ENCODE measurements at regions of chr12 and their contacts with region 1.

Region 1: DNA sequence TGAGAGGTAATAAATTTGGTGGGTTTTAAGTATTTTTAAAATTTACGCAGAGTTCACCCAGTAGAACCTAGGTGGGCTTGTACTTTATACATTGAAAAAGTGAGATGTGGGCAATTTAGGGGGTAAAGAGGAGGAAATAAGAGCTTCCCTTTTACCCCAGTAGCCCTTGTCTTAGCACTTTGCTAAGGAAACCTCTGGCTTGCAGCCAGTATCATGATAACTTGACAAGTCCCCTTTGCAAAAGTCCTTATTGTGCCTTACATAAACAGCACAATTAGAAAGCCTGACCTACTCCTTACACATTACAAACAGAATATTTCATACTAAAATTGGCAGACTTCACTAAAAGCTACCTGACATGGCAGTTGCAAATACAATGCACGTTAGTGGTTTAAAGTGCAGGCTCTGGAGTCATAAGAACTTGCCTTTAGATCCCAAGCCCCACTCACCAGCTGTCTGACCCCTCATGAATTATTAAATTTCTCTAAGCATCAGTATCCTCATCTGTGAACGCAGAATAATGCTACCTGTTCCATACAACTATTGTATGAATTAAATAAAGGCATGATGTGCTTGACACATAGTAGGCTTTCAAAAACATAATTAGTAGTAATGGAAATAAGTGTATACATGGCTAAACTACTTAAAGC is 53.2 kb upstream of the NELL2 start:
- DNase-seq: no peak
- ATAC-seq: no peak

Region 2: GRCh38 chr12:44015335-44015941 is 913.9 kb before region 1 on chr12:
- intact Hi-C with region 1: loop called in 1 of 2 experiments (anchors 10 kb)
- DNase-seq: no peak
- ATAC-seq: peak; percentile 51